K562 (cell line): ENCODE measurements at regions of chr4 and their contacts with region 1.

Region 1: GRCh38 chr4:169791527-169792156 is 33.9 kb upstream of the HPF1 start:
- DNase-seq: peak; percentile 11 to 53 (median 27)
- ATAC-seq: peak; percentile 93
- H3K4me3 ChIP-seq: no peak overlapping the region
- H3K27ac ChIP-seq: no peak overlapping the region
- H3K4me1 ChIP-seq: peaks cover 0 to 4% of the 10 kb centered on the region in 2 experiments; a peak in 1 of 5 replicates
- H3K27me3 ChIP-seq: peaks cover 11 to 14% of the 10 kb centered on the region in 2 experiments; a peak in 4 of 5 replicates
- CTCF ChIP-seq: peak; percentile 49 to 57 (median 54); a peak in 5 of 6 replicates
- EP300 ChIP-seq: no peak
- POLR2A ChIP-seq: no peak
- RAD21 ChIP-seq: peak; percentile 11 to 44; a peak in 3 of 4 replicates

Region 2: GRCh38 chr4:169741569-169741968 is 50.1 kb before region 1 on chr4:
- CTCF ChIA-PET with region 1: no interaction called
- POLR2A ChIA-PET with region 1: no interaction called
- in situ Hi-C with region 1: no loop called
- intact Hi-C with region 1: no loop called
- DNase-seq: no peak
- ATAC-seq: no peak
- H3K4me3 ChIP-seq: no peak overlapping the region
- H3K27ac ChIP-seq: no peak overlapping the region
- H3K4me1 ChIP-seq: no peaks in the 10 kb centered on the region
- H3K27me3 ChIP-seq: no peaks in the 10 kb centered on the region
- CTCF ChIP-seq: no peak
- EP300 ChIP-seq: no peak
- POLR2A ChIP-seq: no peak
- RAD21 ChIP-seq: no peak

Region 3: DNA sequence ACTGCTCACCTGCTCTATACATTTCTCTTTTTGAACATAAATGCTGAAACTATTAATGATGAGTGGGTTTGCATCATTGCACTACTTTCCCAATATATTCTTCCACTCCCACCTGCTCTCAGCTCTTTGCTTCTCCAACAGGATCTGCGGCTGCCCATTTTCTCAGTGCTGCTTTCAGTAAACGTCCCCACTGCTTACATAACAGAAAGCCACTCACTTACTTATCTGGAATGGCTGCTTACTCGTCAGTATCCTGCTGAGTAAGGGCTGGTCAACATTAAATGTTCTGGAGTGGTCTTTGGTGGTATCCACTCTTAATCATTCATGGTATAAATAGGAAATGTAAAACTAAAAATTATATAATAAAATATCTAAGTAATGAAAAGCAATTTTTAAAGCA is 78.9 kb after region 1 on chr4:
- CTCF ChIA-PET with region 1: no interaction called
- POLR2A ChIA-PET with region 1: no interaction called
- in situ Hi-C with region 1: loop called (anchors 5 kb)
- intact Hi-C with region 1: no loop called
- DNase-seq: no peak
- ATAC-seq: no peak
- H3K4me3 ChIP-seq: no peak overlapping the region
- H3K27ac ChIP-seq: no peak overlapping the region
- H3K4me1 ChIP-seq: no peaks in the 10 kb centered on the region
- H3K27me3 ChIP-seq: no peaks in the 10 kb centered on the region
- CTCF ChIP-seq: no peak
- EP300 ChIP-seq: no peak
- POLR2A ChIP-seq: no peak
- RAD21 ChIP-seq: no peak